Activated naive CD4-positive, alpha-beta T cell treated with anti-CD3 and anti-CD28 coated beads for 36 hours (primary cell): ENCODE measurements at regions of chr6 and their contacts with region 1.

Region 1: GRCh38 chr6:46090115-46091079 is 39.4 kb upstream of the ENPP4 start:
- DNase-seq: peak; percentile 72
- H3K4me3 Mint-ChIP-seq: no peak overlapping the region
- H3K27ac Mint-ChIP-seq: no peak overlapping the region
- H3K4me1 Mint-ChIP-seq: no peaks in the 10 kb centered on the region
- H3K27me3 Mint-ChIP-seq: peaks cover 18% of the 10 kb centered on the region

Region 2: DNA sequence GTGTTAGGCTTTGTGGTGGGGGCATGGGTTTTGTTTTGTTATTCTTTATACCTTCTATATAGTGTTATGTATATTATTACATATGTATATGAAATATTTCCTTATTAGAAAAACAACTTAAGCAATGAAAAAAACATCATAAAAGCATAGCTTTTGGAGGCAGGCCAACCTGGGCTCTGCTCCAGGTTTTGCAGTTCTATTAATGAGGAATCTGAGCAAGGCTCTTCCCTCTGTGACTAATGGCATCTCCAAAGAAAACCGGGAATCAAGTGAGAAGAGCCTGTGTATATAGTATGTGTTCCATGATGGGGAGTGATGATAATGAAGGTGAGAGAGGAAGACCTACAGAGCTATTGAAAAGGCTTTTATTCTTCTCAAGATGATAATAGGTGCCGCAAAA is 365.9 kb before region 1 on chr6:
- CTCF ChIA-PET with region 1: no interaction called
- intact Hi-C with region 1: no loop called
- DNase-seq: no peak
- H3K4me3 Mint-ChIP-seq: no peak overlapping the region
- H3K27ac Mint-ChIP-seq: no peak overlapping the region
- H3K4me1 Mint-ChIP-seq: no peaks in the 10 kb centered on the region
- H3K27me3 Mint-ChIP-seq: no peaks in the 10 kb centered on the region

Region 3: DNA sequence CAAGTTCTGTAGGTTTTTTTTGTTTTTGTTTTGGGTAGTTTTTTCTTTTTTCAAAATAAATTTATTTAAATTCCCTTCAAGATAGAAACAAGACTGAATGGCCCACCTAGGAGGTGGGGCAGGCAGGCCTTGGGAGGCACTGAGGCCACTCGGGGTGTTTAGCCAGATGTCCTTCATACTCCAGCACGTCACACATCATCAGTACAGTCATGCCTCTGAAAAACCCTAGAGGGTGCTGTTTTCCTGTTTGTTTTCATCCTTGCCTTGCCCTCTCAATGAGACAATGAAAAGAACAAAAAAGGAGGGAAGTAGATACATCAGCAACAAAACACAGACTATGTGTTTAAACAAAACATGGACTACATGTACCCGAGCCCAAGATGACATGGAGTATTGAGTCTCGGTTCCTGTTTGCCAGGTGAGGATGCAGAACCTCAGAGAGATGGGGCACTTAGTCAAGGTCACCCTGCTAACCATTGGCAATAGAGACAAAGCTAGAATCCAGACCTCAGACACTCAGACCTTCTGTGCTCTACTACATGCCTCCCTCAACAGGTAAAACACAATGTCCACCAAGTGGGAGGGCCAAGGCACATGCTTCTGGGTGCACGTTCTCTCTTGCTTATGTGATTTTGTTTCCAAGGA is 47.9 kb before region 1 on chr6:
- CTCF ChIA-PET with region 1: interaction called, 5 read pairs
- intact Hi-C with region 1: loop called (anchors 1 kb)
- DNase-seq: peak; percentile 20
- H3K4me3 Mint-ChIP-seq: no peak overlapping the region
- H3K27ac Mint-ChIP-seq: no peak overlapping the region
- H3K4me1 Mint-ChIP-seq: peaks cover 4% of the 10 kb centered on the region
- H3K27me3 Mint-ChIP-seq: no peaks in the 10 kb centered on the region

Region 4: DNA sequence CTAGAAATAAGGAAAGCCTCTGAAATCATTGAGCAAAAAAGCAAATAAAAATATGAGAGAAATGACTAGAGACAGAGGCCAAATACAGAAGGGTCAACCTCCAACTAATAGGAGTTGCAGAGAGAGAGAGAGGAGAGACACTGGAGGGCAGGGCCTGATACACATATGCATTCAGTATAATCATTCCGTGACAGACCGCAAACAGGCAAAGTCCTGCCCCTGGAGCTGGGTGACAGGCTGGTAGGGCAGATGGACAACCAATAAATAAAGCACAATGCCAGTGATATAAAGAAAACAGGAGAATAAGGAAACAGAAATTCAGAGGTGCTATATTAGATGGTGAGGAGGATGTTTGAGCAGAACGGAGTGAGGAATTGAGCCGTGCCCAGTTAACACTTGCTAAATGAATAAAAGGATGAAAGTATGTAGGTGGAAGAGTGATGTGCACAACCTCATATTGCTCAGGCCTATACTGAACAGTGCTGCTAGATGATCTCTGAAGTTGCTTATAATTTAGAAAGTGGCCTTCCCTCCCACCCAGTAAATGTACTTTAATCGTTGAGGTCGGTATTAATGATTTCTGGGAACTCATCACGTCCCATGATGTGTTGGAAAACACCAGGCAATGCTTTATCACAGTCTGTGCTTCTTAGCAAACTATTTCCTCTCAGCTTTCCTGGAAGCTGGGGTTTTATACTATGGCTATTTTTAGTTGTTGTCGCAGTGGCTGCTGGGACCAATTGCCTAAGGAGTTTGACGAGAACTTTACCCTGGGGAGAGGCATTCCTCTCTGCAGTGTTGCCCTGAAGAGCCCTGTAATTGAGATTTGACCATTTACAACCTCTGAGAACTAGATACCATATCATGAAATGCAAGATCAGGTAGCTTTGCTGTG is 37.1 kb before region 1 on chr6:
- CTCF ChIA-PET with region 1: no interaction called
- intact Hi-C with region 1: no loop called
- DNase-seq: no peak
- H3K4me3 Mint-ChIP-seq: no peak overlapping the region
- H3K27ac Mint-ChIP-seq: peak overlapping the region; percentile 16
- H3K4me1 Mint-ChIP-seq: peaks cover 7% of the 10 kb centered on the region
- H3K27me3 Mint-ChIP-seq: peaks cover 18% of the 10 kb centered on the region

Region 5: DNA sequence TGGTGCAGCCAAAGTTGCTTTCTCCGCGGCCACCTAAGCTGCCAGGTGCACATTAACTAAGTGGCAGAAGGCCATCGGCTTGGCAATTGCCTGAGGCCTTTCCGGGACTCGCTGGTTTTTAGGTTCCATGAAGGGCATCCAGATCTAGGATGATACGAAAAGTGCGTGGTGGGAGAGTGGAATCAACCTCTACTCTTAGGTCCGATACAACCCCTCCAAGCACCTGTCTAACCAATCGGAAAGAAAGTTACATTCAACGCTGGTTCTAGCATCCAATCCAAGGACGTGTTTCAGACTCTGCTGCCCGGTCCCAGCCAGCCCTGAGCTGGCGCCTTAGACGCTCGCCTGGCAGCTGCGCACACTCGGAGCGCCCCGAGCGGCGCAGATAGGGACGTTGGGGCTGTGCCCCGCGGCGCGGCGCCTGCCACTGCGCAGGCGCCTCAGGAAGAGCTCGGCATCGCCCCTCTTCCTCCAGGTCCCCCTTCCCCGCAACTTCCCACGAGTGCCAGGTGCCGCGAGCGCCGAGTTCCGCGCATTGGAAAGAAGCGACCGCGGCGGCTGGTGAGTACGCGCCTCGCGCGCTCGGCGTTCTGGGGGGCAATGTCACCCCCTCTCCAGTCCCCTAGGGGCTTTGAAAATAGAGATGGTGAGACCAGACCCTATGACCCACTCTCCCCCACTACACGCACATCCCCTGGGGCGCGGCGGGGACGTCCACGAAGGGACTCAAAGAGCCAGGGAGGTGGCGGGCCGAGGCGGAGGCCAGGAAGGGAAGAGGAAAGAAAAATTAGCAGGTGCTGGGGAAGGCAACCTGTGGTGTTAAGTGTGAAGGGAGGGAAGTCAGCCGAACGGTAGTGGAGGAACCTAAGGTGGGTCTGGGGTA is 39.5 kb after region 1 on chr6 and contains the start of gene ENPP4:
- CTCF ChIA-PET with region 1: interaction called, 5 read pairs
- intact Hi-C with region 1: loop called (anchors 2 kb)
- DNase-seq: peak; percentile 91
- H3K4me3 Mint-ChIP-seq: peak within 1 kb of the TSS; percentile 92
- H3K27ac Mint-ChIP-seq: peak within 1 kb of the TSS; percentile 77
- H3K4me1 Mint-ChIP-seq: peaks cover 27% of the 10 kb centered on the region
- H3K27me3 Mint-ChIP-seq: no peaks in the 10 kb centered on the region
- total RNA-seq, gene ENPP4: 7.7 to 8.0 TPM

Region 6: GRCh38 chr6:46491628-46492547 is 401.5 kb after region 1 on chr6:
- CTCF ChIA-PET with region 1: no interaction called
- intact Hi-C with region 1: loop called (anchors 2 kb)
- DNase-seq: no peak
- H3K4me3 Mint-ChIP-seq: peak overlapping the region; percentile 12
- H3K27ac Mint-ChIP-seq: no peak overlapping the region
- H3K4me1 Mint-ChIP-seq: peaks cover 7% of the 10 kb centered on the region
- H3K27me3 Mint-ChIP-seq: peaks cover 58% of the 10 kb centered on the region